SK-MEL-5 (cell line): ENCODE measurements at regions of chr7 and their contacts with region 1.

Region 1: DNA sequence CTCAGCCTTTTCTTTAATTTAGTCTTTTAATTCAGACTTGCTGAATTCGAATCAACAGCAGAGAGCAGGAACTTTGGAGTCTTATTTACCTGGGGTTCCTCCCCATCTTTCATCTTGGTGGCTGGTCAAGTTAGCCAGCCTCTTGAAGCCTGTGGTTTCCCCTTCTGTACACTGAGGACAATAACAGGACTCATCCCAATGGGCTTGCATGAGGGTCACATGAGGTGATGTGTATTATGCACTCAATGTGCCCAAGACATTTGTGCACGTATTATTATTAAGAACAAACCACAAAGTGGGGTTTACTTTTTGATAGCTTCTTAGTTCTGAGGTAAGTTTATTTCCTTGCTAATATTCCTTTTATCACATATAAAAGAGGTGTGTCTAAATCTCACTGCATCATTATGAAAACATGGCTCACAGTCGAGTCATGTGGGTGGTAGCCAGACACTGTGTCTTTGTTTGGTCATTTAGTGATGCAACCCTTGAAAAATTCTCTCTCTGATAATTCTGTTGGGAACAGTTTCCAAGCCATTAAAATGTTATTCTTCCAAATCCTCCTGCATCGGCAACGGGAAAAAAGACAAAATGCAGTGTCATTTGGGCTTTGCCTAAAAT is 86.5 kb upstream of the GRB10 start:
- DNase-seq: peak; percentile 97

Region 2: GRCh38 chr7:50812841-50813475 is 56.3 kb before region 1 on chr7:
- in situ Hi-C with region 1: loop called (anchors 10 kb)
- DNase-seq: peak; percentile 58

Region 3: GRCh38 chr7:51009704-51010496 is 140.7 kb after region 1 on chr7:
- in situ Hi-C with region 1: no loop called
- DNase-seq: no peak